Lower lobe of right lung (tissue), 2 donors: ENCODE measurements at regions of chr1 and their contacts with region 1.

Region 1: DNA sequence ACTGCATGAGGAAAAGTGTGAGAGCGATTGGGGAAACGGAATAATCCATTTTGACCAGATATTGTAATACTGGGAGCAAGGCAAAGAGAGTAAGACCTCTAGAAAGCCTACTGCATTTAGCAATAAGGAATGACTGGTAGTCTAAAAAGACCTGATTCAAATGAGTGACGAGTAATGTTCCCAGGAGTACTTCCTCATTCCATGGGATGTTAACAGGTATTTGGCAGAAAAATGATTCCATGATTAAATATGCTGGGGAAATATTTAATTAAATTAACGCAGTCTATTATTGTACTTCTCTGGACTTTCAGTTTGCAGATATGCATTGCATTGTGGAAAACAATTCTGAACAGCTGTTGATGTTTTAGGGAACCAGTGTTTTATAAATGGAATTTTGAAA is 105.5 kb downstream of the RPE65 start:
- DNase-seq: no peak
- ATAC-seq: peak in 1 of 2 donors; percentile 47
- H3K4me3 ChIP-seq: no peak overlapping the region
- H3K27ac ChIP-seq: no peak overlapping the region
- H3K4me1 ChIP-seq: no peaks in the 10 kb centered on the region
- H3K27me3 ChIP-seq: no peaks in the 10 kb centered on the region
- CTCF ChIP-seq: no peak

Region 2: GRCh38 chr1:67921725-67922489 is 422.3 kb before region 1 on chr1:
- intact Hi-C with region 1: no loop called
- DNase-seq: no peak
- ATAC-seq: no peak
- H3K4me3 ChIP-seq: no peak overlapping the region
- H3K27ac ChIP-seq: no peak overlapping the region
- H3K4me1 ChIP-seq: no peaks in the 10 kb centered on the region
- H3K27me3 ChIP-seq: no peaks in the 10 kb centered on the region
- CTCF ChIP-seq: no peak

Region 3: DNA sequence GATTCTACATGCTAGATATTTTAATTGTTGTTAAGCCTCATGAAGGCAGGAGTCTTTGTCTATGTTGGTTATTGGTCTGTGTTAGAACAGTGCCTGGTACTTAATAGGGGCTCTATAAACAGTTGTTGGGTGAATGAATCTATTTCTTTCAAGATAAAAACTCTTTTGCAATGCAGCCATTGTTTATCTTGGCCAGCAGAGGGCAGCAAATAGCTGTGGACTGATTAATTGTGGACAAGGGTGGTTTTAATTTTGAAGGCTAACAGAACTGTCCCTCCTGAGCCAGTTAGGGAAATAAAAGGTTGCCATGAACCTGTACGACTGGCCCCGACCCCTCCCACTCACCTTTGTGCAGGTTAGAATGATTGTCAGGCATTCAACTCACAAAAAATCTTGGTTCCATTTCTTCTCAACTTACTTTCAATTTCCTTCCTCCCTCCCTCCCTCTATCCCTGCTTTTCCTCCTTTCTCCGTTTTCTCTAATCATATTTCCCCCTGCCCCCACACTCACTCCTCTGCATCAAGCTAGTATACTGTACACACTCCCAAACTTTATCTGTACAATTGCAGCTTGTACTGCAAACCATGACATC is 227.5 kb before region 1 on chr1:
- intact Hi-C with region 1: loop called (anchors 5 kb)
- DNase-seq: no peak
- ATAC-seq: peak; percentile 21 to 31
- H3K4me3 ChIP-seq: peak overlapping the region; percentile 20
- H3K27ac ChIP-seq: no peak overlapping the region
- H3K4me1 ChIP-seq: peaks cover 9% of the 10 kb centered on the region
- H3K27me3 ChIP-seq: no peaks in the 10 kb centered on the region
- CTCF ChIP-seq: peak; percentile 89

Region 4: GRCh38 chr1:68213843-68214242 is 130.4 kb before region 1 on chr1:
- intact Hi-C with region 1: no loop called
- DNase-seq: peak; percentile 52
- ATAC-seq: peak; percentile 16 to 52
- H3K4me3 ChIP-seq: no peak overlapping the region
- H3K27ac ChIP-seq: no peak overlapping the region
- H3K4me1 ChIP-seq: peaks cover 41% of the 10 kb centered on the region
- H3K27me3 ChIP-seq: no peaks in the 10 kb centered on the region
- CTCF ChIP-seq: no peak